WTC11 (cell line): ENCODE measurements at regions of chr17 and their contacts with region 1.

Region 1: GRCh38 chr17:34361478-34362061 is 1.5 kb downstream of the CCL1 start:
- DNase-seq: peak; percentile 97
- ATAC-seq: peak; percentile 96
- H3K4me3 Mint-ChIP-seq: no peak overlapping the region
- H3K27ac Mint-ChIP-seq: no peak overlapping the region
- H3K4me1 Mint-ChIP-seq: peaks cover 5% of the 10 kb centered on the region
- H3K27me3 Mint-ChIP-seq: peaks cover 13% of the 10 kb centered on the region; the same call in 1 of the 2 replicates
- CTCF ChIP-seq: peak; percentile 89

Region 2: GRCh38 chr17:33927732-33928133 is 433.8 kb before region 1 on chr17:
- CTCF ChIA-PET with region 1: interaction called, 18 read pairs
- POLR2A ChIA-PET with region 1: no interaction called
- DNase-seq: no peak
- ATAC-seq: no peak
- H3K4me3 Mint-ChIP-seq: no peak overlapping the region
- H3K27ac Mint-ChIP-seq: no peak overlapping the region
- H3K4me1 Mint-ChIP-seq: peaks cover 53% of the 10 kb centered on the region
- H3K27me3 Mint-ChIP-seq: no peaks in the 10 kb centered on the region
- CTCF ChIP-seq: no peak

Region 3: GRCh38 chr17:34171245-34171818 is 190.2 kb before region 1 on chr17:
- CTCF ChIA-PET with region 1: interaction called, 86 read pairs
- POLR2A ChIA-PET with region 1: no interaction called
- DNase-seq: peak; percentile 78
- ATAC-seq: peak; percentile 94
- H3K4me3 Mint-ChIP-seq: no peak overlapping the region
- H3K27ac Mint-ChIP-seq: no peak overlapping the region
- H3K4me1 Mint-ChIP-seq: peaks cover 29% of the 10 kb centered on the region
- H3K27me3 Mint-ChIP-seq: no peaks in the 10 kb centered on the region; the same call in 1 of the 2 replicates
- CTCF ChIP-seq: peak; percentile 96

Region 4: GRCh38 chr17:34241062-34241461 is 120.5 kb before region 1 on chr17:
- CTCF ChIA-PET with region 1: interaction called, 20 read pairs
- POLR2A ChIA-PET with region 1: no interaction called
- DNase-seq: no peak
- ATAC-seq: no peak; the same call in 1 of the 2 replicates
- H3K4me3 Mint-ChIP-seq: no peak overlapping the region
- H3K27ac Mint-ChIP-seq: no peak overlapping the region
- H3K4me1 Mint-ChIP-seq: peaks cover 17% of the 10 kb centered on the region
- H3K27me3 Mint-ChIP-seq: no peaks in the 10 kb centered on the region; the same call in 1 of the 2 replicates
- CTCF ChIP-seq: no peak

Region 5: GRCh38 chr17:34261568-34262337 is 99.8 kb before region 1 on chr17:
- CTCF ChIA-PET with region 1: no interaction called
- POLR2A ChIA-PET with region 1: no interaction called
- DNase-seq: no peak
- ATAC-seq: no peak
- H3K4me3 Mint-ChIP-seq: no peak overlapping the region
- H3K27ac Mint-ChIP-seq: no peak overlapping the region
- H3K4me1 Mint-ChIP-seq: peaks cover 5% of the 10 kb centered on the region
- H3K27me3 Mint-ChIP-seq: peaks cover 16% of the 10 kb centered on the region
- CTCF ChIP-seq: no peak

Region 6: DNA sequence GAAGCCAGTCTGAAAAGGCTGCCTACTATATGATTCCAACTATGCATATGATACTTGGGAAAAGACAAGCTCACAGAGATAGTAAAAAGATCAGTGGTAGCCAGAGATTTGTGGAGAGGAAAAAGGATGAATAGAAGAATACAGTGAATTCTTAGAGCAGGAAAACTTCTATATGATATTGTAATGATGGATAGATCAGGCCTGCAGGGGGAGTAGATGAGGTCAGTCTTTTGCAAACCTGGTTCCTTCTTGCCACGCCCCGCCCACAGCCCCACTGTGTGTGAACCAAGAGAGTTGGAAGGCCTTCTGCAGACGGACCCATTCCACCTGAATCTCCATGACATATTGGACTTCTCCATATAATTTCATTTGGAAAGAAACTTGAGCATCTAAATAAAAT is 43.1 kb before region 1 on chr17:
- CTCF ChIA-PET with region 1: interaction called, 78 read pairs
- POLR2A ChIA-PET with region 1: no interaction called
- DNase-seq: peak; percentile 63
- ATAC-seq: peak; percentile 85
- H3K4me3 Mint-ChIP-seq: no peak overlapping the region
- H3K27ac Mint-ChIP-seq: no peak overlapping the region
- H3K4me1 Mint-ChIP-seq: no peaks in the 10 kb centered on the region; the same call in 1 of the 2 replicates
- H3K27me3 Mint-ChIP-seq: peaks cover 14% of the 10 kb centered on the region
- CTCF ChIP-seq: no peak; the same call in 1 of the 2 replicates

Region 7: DNA sequence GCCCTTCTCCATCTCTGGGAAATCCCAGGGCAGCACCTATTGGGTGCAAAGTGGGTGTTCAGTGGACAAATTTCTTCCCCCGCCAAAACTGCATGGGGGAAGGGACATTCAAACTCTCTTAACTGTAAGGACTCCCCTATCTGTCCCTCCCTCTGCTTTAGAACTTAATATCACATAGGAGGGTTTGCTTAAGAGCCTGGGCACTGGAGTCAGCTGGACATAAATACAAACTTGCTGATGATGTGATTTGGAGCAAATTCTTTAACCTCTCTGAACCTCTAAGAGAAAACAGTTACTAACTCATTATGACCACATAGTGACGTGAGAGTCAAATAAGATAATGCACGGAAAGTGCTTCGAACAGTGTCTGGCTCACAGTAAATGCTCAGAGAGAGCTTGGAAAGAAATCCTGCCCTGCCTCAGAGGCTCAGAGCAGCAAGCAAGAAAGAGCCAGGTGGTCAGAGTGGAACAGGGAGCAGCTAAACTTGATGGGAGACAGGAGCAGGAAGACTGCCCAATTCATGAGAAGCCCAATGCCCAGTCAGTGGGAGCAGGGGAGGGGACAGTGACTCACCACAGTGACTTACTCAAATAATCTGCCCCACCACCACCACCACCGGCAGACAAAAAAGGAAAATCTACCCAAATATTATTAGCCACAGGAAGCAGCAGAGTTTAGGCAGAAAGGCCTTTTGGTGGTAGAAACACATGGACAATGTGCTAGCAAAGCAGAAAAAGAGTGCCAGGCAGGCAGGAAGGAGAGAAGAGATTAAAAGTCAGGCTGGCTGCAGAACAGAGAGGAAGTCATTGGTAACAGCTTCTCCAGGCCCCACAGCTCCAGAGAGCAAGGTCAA is 25.4 kb after region 1 on chr17:
- CTCF ChIA-PET with region 1: interaction called, 45 read pairs
- POLR2A ChIA-PET with region 1: no interaction called
- DNase-seq: no peak
- ATAC-seq: no peak
- H3K4me3 Mint-ChIP-seq: no peak overlapping the region
- H3K27ac Mint-ChIP-seq: no peak overlapping the region
- H3K4me1 Mint-ChIP-seq: no peaks in the 10 kb centered on the region
- H3K27me3 Mint-ChIP-seq: peaks cover 21% of the 10 kb centered on the region
- CTCF ChIP-seq: no peak

Region 8: GRCh38 chr17:34499576-34499975 is 138.0 kb after region 1 on chr17:
- CTCF ChIA-PET with region 1: no interaction called
- POLR2A ChIA-PET with region 1: no interaction called
- DNase-seq: peak; percentile 44
- ATAC-seq: peak; percentile 97
- H3K4me3 Mint-ChIP-seq: no peak overlapping the region
- H3K27ac Mint-ChIP-seq: no peak overlapping the region
- H3K4me1 Mint-ChIP-seq: no peaks in the 10 kb centered on the region
- H3K27me3 Mint-ChIP-seq: peaks cover 21% of the 10 kb centered on the region
- CTCF ChIP-seq: no peak